ENCODE measurements at regions of chr2 and their contacts with region 1.

Region 1: GRCh38 chr2:231701456-231702373 is 6.6 kb upstream of the PTMA start:
- DNase-seq: no peak
- ATAC-seq: no peak
- H3K4me3 ChIP-seq: no peak overlapping the region
- H3K4me3 Mint-ChIP-seq: no peak overlapping the region
- H3K27ac ChIP-seq: no peak overlapping the region
- H3K27ac Mint-ChIP-seq: no peak overlapping the region
- H3K4me1 ChIP-seq: peaks cover 11 to 12% of the 10 kb centered on the region in 2 donors
- H3K4me1 Mint-ChIP-seq: peaks cover 0 to 21% (median 11%) of the 10 kb centered on the region in 7 donors
- H3K27me3 ChIP-seq: no peaks in the 10 kb centered on the region
- H3K27me3 Mint-ChIP-seq: no peaks in the 10 kb centered on the region

Region 2: DNA sequence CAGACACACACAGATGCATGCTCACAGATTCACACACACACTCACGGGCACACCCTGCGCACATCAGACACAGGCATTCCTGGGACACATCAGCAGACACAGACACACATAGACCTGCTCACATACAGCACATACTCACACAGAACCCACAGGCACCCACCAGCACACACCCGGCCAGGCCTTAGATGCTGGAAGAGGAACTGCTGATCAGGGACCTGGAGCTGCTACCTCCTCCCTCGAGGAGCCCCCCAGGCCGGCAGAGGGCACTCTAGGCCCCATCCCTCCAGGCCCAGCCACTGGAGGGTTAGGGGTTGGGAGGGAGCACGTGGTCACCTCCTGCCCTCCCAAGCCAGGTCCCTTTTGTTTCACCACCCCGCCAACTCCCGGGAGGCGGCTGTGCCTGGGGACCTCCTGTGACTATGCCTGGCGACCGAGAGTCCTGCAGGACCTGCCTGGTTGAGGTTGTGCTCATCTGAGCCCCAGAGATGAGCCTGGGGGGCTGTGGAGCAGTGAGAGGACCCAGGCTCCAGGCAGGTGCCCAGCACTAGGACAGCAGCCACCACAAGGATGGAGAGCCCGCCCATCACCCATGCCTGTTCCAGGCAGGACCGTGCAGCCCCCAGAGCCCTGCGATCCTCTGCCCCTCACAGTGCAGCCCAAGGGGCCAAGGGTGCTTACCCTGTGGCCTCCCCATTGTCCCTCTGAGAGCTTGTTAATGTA is 14.4 kb before region 1 on chr2:
- CTCF ChIA-PET with region 1: interaction called, 18 read pairs
- POLR2A ChIA-PET with region 1: interaction called, 75 read pairs
- intact Hi-C with region 1: no loop called
- DNase-seq: peak; percentile 50 to 70 (median 64)
- ATAC-seq: peak; percentile 91
- H3K4me3 ChIP-seq: no peak overlapping the region
- H3K4me3 Mint-ChIP-seq: no peak overlapping the region
- H3K27ac ChIP-seq: no peak overlapping the region
- H3K27ac Mint-ChIP-seq: peak overlapping the region in 1 of 9 donors; percentile 8
- H3K4me1 ChIP-seq: no peaks in the 10 kb centered on the region
- H3K4me1 Mint-ChIP-seq: peaks cover 0 to 11% (median 8%) of the 10 kb centered on the region in 7 donors
- H3K27me3 ChIP-seq: no peaks in the 10 kb centered on the region
- H3K27me3 Mint-ChIP-seq: peaks cover 5 to 14% (median 8%) of the 10 kb centered on the region in 5 donors

Region 3: DNA sequence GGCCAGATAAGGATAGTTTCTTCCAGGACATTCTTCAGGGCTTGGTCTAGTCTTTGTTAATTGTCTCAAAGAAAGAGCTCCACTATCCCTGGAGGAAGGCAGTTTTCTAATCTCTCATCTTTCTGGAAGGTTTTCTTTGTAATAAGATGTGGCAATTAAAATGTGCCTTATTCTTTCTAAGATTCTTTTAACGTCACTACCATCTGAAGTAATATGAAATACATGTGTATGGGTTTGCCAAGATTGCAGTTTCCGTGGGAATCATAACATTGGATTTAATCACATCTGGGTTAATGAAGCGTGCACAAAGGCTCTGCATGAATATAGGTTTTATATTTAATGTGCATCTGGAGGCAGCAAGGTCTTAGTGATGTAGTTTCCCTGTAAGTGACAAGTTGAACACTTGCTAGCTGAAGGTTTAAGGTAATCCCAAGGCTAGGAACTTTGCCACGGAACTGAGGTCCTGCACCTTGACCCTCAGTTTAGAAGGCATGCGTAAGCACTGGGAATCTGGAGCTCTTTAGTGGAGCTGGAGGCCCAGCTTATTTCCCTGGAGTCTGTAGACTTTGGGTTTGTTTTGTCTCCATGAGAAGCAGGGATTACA is 285.5 kb after region 1 on chr2:
- CTCF ChIA-PET with region 1: no interaction called
- POLR2A ChIA-PET with region 1: no interaction called
- intact Hi-C with region 1: no loop called
- DNase-seq: no peak
- ATAC-seq: no peak
- H3K4me3 ChIP-seq: no peak overlapping the region
- H3K4me3 Mint-ChIP-seq: peak overlapping the region in 1 of 10 donors; percentile 73
- H3K27ac ChIP-seq: no peak overlapping the region
- H3K27ac Mint-ChIP-seq: no peak overlapping the region
- H3K4me1 ChIP-seq: no peaks in the 10 kb centered on the region
- H3K4me1 Mint-ChIP-seq: peaks cover 0 to 64% (median 54%) of the 10 kb centered on the region in 7 donors
- H3K27me3 ChIP-seq: no peaks in the 10 kb centered on the region
- H3K27me3 Mint-ChIP-seq: no peaks in the 10 kb centered on the region

Measured in naive thymus-derived CD4-positive, alpha-beta T cell (primary cell).